ENCODE measurements at regions of chr6 and their contacts with region 1.

Region 1: GRCh38 chr6:33200219-33201146 is at the starts of genes RXRB and SLC39A7:
- DNase-seq: peak; percentile 100
- ATAC-seq: peak; percentile 48
- H3K4me3 ChIP-seq: peak within 1 kb of the TSS; percentile 87 to 93 (median 93)
- H3K27ac ChIP-seq: peak within 1 kb of the TSS; percentile 99
- H3K4me1 ChIP-seq: peaks cover 66% of the 10 kb centered on the region
- H3K27me3 ChIP-seq: peaks cover 0 to 4% of the 10 kb centered on the region in 2 experiments; a peak in 1 of 5 replicates
- CTCF ChIP-seq: no peak
- EP300 ChIP-seq: peak in 1 of 2 experiments; percentile 17; a peak in 2 of 4 replicates
- POLR2A ChIP-seq: peak in 1 of 2 experiments; percentile 90; a peak in 2 of 4 replicates
- RAD21 ChIP-seq: peak; percentile 28; the same call in 1 of the 2 replicates
- total RNA-seq, gene RXRB: 21.2 and 26.7 TPM in 2 replicates
- total RNA-seq, gene SLC39A7: 127 and 229 TPM in 2 replicates

Region 2: DNA sequence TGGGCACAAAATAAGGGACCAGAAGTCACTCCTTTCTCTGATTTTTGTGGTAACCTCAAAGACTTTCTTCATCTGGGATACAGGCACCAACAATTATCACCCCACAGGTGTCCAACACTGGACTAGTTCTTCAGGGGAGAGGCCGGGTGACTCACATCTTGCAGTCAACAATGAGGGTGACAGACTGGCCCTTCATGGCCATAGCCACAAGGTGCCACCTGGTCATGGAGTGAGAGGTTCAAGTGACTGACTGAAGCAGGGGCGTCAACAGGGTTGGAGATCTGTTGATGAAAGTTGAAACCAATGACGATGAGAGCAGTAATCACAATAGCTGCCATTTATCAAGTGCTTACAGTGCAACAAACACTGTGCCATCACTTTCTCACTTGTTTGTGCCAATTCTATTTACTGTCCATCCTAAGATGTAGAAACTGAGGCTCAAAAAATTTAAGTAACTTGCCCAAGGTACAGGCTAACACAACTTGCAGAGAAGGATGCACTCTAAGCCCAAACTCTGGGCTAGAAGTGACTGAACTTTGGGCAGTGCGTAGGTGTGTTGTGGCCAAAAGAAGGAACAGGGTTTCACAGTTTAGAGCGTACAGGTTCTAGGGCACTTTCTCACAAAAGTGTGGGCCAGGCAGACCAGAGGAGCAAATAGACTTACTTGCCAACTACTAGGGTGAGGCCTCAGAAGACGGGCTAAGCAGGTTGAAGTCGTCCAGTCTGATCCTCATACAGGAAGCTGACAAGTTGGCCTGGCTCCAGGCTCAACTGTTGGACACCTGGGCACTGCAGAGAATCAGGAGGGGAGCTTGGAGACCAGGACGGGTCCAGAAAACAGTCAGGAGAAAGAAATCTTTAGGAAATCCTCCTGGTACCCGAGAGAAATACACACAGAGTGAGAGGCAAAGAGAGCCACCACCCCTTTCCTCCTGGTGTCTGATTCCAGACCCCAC is 94.3 kb before region 1 on chr6:
- CTCF ChIA-PET with region 1: no interaction called
- POLR2A ChIA-PET with region 1: no interaction called
- in situ Hi-C with region 1: no loop called
- intact Hi-C with region 1: no loop called
- DNase-seq: no peak
- ATAC-seq: no peak
- H3K4me3 ChIP-seq: no peak overlapping the region
- H3K27ac ChIP-seq: no peak overlapping the region
- H3K4me1 ChIP-seq: no peaks in the 10 kb centered on the region
- H3K27me3 ChIP-seq: peaks cover 0 to 11% of the 10 kb centered on the region in 2 experiments; a peak in 2 of 5 replicates
- CTCF ChIP-seq: no peak
- EP300 ChIP-seq: no peak
- POLR2A ChIP-seq: no peak
- RAD21 ChIP-seq: no peak

Region 3: GRCh38 chr6:33161354-33162331 is 38.8 kb before region 1 on chr6:
- CTCF ChIA-PET with region 1: interaction called, 11 read pairs
- POLR2A ChIA-PET with region 1: interaction called, 6 read pairs
- in situ Hi-C with region 1: no loop called
- intact Hi-C with region 1: loop called (anchors 1 kb)
- DNase-seq: peak; percentile 23
- ATAC-seq: peak; percentile 84
- H3K4me3 ChIP-seq: peak overlapping the region; percentile 49 to 74 (median 56)
- H3K27ac ChIP-seq: no peak overlapping the region
- H3K4me1 ChIP-seq: peaks cover 54% of the 10 kb centered on the region
- H3K27me3 ChIP-seq: peaks cover 6 to 20% of the 10 kb centered on the region in 2 experiments; a peak in 4 of 5 replicates
- CTCF ChIP-seq: peak; percentile 96
- EP300 ChIP-seq: no peak
- POLR2A ChIP-seq: no peak
- RAD21 ChIP-seq: peak; percentile 83

Region 4: DNA sequence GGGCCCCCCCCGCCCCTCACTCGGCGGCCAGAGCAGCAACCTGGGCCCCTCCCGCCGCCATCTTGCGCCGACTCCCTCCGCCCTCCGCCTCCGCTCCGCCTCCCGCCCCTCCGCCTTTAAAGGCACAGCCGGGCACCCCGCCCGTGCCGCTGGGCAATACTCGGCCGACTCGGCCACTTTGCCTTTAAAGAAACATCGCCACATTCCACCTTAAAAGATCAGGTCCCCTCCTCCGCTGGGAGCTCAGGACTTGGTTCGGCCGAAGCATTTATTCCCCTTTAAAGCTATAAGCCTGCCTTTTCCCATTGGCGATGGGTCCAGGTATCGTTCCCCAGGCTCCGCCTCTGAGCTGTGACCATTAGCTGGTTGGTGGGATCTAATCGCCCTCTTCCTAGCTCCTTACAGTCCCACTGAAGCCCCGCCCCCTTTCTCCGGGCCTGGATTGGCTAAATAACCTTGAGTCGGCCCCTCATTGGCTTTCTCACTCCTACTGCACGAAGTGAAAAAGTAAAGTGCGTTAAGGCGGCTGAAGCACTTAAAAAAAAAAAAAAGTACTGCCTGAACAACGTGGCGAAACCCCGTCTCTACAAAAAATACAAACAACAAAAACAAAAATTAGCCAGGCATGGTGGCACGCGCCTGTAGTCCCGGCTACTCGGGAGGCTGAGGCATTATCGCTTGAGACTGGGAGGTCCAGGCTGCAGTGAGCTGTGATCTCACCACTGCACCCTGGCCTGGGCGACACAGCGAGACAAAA is 117.4 kb after region 1 on chr6 and contains the start of gene ZBTB22:
- CTCF ChIA-PET with region 1: no interaction called
- POLR2A ChIA-PET with region 1: interaction called, 10 read pairs
- in situ Hi-C with region 1: no loop called
- intact Hi-C with region 1: no loop called
- DNase-seq: peak; percentile 99
- ATAC-seq: peak; percentile 79
- H3K4me3 ChIP-seq: peak within 1 kb of the TSS; percentile 71 to 79 (median 73)
- H3K27ac ChIP-seq: peak within 1 kb of the TSS; percentile 82
- H3K4me1 ChIP-seq: peaks cover 55% of the 10 kb centered on the region
- H3K27me3 ChIP-seq: no peaks in the 10 kb centered on the region; a peak in 2 of 5 replicates
- CTCF ChIP-seq: no peak
- EP300 ChIP-seq: no peak
- POLR2A ChIP-seq: no peak
- RAD21 ChIP-seq: no peak
- total RNA-seq, gene ZBTB22: 6.6 and 8.0 TPM in 2 replicates

Measured in HepG2 (cell line).